MCF 10A (cell line): ENCODE measurements at regions of chr4 and their contacts with region 1.

Region 1: DNA sequence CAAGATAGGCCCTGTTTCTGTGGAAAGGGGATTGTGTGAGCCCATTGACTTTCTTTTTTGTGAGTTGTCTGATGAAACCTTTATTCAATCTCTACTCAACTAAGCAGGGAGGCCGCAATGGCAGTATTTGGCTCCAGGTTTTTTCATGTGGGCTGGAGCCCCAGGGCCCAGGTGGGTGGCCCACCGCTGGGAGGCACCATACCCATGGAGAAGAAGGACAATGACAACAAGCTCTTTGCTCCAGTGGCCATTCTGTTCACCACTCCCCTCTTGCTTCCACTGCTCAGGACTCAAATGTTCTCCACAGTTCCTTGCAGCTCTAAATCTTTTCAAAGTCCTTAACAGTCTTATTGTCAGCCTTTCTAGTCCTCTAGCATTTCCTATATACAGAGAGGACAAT is 54.1 kb downstream of the HOPX start:
- DNase-seq: no peak
- H3K4me3 Mint-ChIP-seq: no peak overlapping the region
- H3K27ac Mint-ChIP-seq: no peak overlapping the region
- H3K4me1 Mint-ChIP-seq: peaks cover 33% of the 10 kb centered on the region
- H3K27me3 Mint-ChIP-seq: no peaks in the 10 kb centered on the region
- CTCF ChIP-seq: no peak

Region 2: GRCh38 chr4:56606385-56606784 is 20.6 kb before region 1 on chr4:
- CTCF ChIA-PET with region 1: no interaction called
- POLR2A ChIA-PET with region 1: no interaction called
- intact Hi-C with region 1: no loop called
- DNase-seq: no peak
- H3K4me3 Mint-ChIP-seq: no peak overlapping the region
- H3K27ac Mint-ChIP-seq: no peak overlapping the region
- H3K4me1 Mint-ChIP-seq: no peaks in the 10 kb centered on the region
- H3K27me3 Mint-ChIP-seq: no peaks in the 10 kb centered on the region
- CTCF ChIP-seq: no peak

Region 3: DNA sequence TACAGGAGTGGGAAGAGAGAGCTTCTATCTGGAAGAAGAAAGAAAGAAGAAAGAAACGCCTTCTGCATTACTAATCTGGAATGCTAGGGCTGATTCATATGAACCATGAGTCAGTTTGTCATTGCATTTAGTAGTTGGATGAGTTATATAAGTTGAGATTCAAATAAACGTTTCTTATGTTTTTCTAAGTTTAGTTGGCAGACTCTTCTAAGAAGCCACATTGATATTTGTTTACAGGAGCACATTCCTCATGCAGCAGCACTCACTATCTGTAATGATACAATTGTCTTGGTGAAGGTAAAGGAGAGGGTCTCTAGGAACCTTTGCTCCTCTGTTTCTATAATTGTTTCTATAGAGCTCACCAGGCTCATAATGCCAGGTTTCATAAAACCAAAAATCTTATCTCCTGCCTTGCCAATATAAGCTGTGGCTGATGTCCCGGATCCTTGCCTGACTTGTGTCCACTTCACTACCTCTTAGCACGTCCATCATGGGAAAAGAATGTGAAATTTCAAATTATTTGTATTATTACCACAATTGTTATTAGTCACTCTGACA is 14.6 kb after region 1 on chr4:
- CTCF ChIA-PET with region 1: interaction called, 10 read pairs
- POLR2A ChIA-PET with region 1: interaction called, 6 read pairs
- intact Hi-C with region 1: no loop called
- DNase-seq: peak; percentile 82
- H3K4me3 Mint-ChIP-seq: peak overlapping the region; percentile 11
- H3K27ac Mint-ChIP-seq: peak overlapping the region; percentile 52
- H3K4me1 Mint-ChIP-seq: peaks cover 37% of the 10 kb centered on the region
- H3K27me3 Mint-ChIP-seq: no peaks in the 10 kb centered on the region
- CTCF ChIP-seq: no peak